IMR-90 (cell line): ENCODE measurements at regions of chr7 and their contacts with region 1.

Region 1: DNA sequence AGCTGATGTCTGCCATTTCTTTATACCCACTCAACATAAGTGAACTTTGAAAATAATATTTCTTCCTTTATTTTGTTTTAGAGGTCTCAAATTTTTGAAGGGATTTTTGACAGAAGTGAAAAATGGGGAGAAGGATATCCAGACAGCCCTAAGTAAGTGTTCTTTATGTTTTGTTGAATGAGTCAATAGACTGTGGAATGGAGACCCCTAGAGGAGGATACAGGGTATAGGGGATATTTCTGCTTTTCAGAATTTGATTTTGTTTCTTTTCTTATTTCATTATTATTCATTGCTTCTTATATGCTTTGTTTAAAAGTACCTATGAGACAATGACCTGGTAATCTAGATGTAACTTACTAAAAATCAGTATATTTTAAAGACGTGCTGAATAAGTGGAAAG is 34.4 kb downstream of the PLEKHA8 start:
- DNase-seq: peak; percentile 56
- ATAC-seq: peak; percentile 89
- H3K4me3 ChIP-seq: no peak overlapping the region
- H3K27ac ChIP-seq: no peak overlapping the region
- H3K4me1 ChIP-seq: no peaks in the 10 kb centered on the region
- H3K27me3 ChIP-seq: no peaks in the 10 kb centered on the region
- CTCF ChIP-seq: peak; percentile 77
- POLR2A ChIP-seq: no peak
- RAD21 ChIP-seq: peak; percentile 73

Region 2: DNA sequence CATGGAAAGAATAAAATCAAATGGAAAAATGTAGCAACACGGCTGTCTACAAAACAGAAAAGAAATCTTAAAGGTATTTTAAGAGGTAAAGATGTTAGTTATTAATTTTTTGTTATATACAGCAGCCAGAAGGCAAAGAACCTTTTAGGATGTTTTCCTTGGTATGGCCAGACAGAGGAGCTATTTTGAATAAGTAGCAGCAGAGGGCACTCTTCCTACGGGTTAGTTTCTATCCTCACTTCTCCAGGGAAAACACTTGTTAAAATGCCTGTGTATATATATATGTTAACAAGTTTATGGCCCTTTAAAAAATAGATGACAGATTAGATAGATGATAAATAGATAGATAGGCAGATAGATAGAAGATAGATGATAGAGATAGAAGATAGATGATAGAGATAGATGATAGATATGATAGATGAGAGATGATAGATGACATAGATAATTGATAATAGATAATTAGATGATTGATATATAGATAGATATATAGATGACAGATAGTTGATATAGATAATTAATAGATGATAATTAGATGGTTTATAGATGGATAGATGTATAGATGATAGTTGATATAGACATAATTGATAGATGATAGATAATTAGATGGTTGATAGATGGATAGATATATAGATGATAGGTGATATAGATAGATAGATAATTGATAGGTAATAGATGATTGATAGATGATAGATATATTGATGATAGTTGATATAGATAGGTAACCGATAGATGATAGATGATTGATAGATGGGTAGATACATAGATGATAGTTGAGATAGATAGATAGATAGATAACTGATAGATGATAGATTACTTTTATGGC is 314.1 kb before region 1 on chr7:
- CTCF ChIA-PET with region 1: no interaction called
- POLR2A ChIA-PET with region 1: no interaction called
- dilution Hi-C with region 1: no loop called
- in situ Hi-C with region 1: loop called (anchors 25 kb)
- intact Hi-C with region 1: loop called (anchors 2 kb)
- DNase-seq: peak; percentile 45
- ATAC-seq: peak; percentile 95
- H3K4me3 ChIP-seq: no peak overlapping the region
- H3K27ac ChIP-seq: no peak overlapping the region
- H3K4me1 ChIP-seq: no peaks in the 10 kb centered on the region
- H3K27me3 ChIP-seq: peaks cover 2% of the 10 kb centered on the region; the same call in 1 of the 2 replicates
- CTCF ChIP-seq: peak; percentile 53
- POLR2A ChIP-seq: no peak
- RAD21 ChIP-seq: peak; percentile 51

Region 3: GRCh38 chr7:29946428-29947186 is 116.0 kb before region 1 on chr7:
- CTCF ChIA-PET with region 1: no interaction called
- POLR2A ChIA-PET with region 1: no interaction called
- dilution Hi-C with region 1: no loop called
- in situ Hi-C with region 1: no loop called
- intact Hi-C with region 1: loop called (anchors 1 kb)
- DNase-seq: no peak
- ATAC-seq: peak; percentile 14
- H3K4me3 ChIP-seq: no peak overlapping the region
- H3K27ac ChIP-seq: no peak overlapping the region
- H3K4me1 ChIP-seq: peaks cover 4% of the 10 kb centered on the region; the same call in 1 of the 2 replicates
- H3K27me3 ChIP-seq: no peaks in the 10 kb centered on the region
- CTCF ChIP-seq: peak; percentile 33
- POLR2A ChIP-seq: no peak
- RAD21 ChIP-seq: peak; percentile 34

Region 4: DNA sequence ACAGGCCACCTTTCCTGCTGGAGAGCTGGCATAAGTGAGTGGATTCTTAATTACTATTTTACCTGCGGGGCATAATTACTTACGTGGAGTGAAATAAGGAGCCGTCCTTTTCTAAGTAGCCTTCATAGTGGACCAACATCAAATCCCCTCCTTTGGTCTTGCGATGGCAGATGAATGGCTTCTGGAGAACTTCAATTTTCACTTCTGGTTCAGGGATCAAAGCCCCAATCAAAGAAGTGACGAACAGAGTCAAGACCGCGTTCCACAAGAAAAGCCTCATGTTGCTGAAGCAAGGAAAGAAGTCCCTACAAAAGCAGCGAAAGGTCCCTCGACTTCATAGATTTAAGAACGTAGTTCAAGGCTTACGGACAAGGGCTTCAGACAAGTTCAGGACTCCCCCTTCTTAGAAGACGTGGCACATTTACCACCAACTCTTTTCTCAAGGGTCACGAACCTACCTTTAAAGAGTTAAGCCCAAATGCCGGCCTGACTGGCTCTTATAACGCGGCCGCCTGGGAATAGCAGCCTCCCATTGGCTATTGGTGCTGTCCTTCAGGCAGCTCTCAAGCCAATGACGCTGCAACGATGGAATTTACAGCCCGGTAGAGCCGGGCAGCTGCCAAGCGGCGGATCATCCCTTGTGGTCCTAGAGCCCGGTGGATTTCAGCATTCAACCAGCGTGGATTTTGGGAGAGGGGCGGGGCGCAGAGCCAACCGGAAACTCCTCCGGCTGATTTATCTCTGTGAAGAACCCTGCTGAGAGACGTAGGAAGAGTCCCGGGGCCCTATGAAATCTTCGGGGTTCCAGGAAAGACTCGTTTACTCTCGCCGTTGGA is 36.1 kb before region 1 on chr7 and contains the start of gene FKBP14:
- CTCF ChIA-PET with region 1: interaction called, 4 read pairs
- POLR2A ChIA-PET with region 1: no interaction called
- dilution Hi-C with region 1: no loop called
- in situ Hi-C with region 1: no loop called
- intact Hi-C with region 1: loop called (anchors 5 kb)
- DNase-seq: peak; percentile 100
- ATAC-seq: peak; percentile 86
- H3K4me3 ChIP-seq: peak within 1 kb of the TSS; percentile 81
- H3K27ac ChIP-seq: peak within 1 kb of the TSS; percentile 87
- H3K4me1 ChIP-seq: no peaks in the 10 kb centered on the region; the same call in 1 of the 2 replicates
- H3K27me3 ChIP-seq: no peaks in the 10 kb centered on the region
- CTCF ChIP-seq: no peak
- POLR2A ChIP-seq: peak; percentile 78
- RAD21 ChIP-seq: no peak
- total RNA-seq, gene FKBP14: 27.1 and 45.0 TPM in 2 replicates